ENCODE measurements at regions of chr19 and their contacts with region 1.

Region 1: GRCh38 chr19:1249298-1249989 is 1.1 kb downstream of the MIDN start:
- DNase-seq: no peak
- H3K4me3 ChIP-seq: peak overlapping the region; percentile 79 to 85
- H3K27ac ChIP-seq: peak overlapping the region; percentile 100
- H3K4me1 ChIP-seq: peaks cover 58% of the 10 kb centered on the region
- H3K27me3 ChIP-seq: no peaks in the 10 kb centered on the region
- CTCF ChIP-seq: no peak
- POLR2A ChIP-seq: peak; percentile 37 to 98

Region 2: DNA sequence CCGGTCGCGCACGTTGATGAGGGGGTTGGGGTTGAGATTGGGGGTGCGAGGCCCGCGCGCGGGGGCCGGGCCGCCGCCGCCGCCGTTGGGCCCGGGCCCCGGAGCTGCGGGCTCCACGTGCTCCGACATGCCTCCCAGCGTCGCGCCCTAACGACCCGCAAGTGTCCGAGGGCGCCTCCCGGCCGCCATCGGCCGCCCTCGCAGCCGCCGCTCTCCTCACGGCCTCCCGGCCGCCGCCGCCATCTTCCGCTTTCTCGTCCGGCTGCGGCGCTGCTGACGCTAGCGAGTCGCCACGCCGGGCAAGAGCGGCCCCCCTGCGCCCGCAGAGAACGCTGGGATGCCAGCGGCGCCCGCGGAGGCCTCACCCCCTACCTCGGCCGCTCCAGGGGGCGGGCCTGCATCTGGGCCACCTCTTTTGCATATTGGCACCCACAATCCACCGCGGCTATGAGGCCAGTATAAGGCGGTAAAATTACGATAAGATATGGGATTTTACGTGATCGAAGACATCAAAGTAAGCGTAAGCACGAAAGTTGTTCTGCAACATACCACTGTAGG is 228.5 kb before region 1 on chr19 and contains the start of gene TMEM259:
- intact Hi-C with region 1: loop called (anchors 5 kb)
- DNase-seq: no peak
- H3K4me3 ChIP-seq: peak within 1 kb of the TSS; percentile 86 to 87
- H3K27ac ChIP-seq: peak within 1 kb of the TSS; percentile 97
- H3K4me1 ChIP-seq: peaks cover 56% of the 10 kb centered on the region
- H3K27me3 ChIP-seq: no peaks in the 10 kb centered on the region
- CTCF ChIP-seq: no peak
- POLR2A ChIP-seq: peak in 1 of 2 donors; percentile 71
- total RNA-seq, gene TMEM259: 130 TPM

Region 3: GRCh38 chr19:1260636-1261537 is 11.4 kb after region 1 on chr19:
- intact Hi-C with region 1: loop called (anchors 1 kb)
- DNase-seq: no peak
- H3K4me3 ChIP-seq: peak overlapping the region; percentile 72 to 79
- H3K27ac ChIP-seq: peak overlapping the region; percentile 97
- H3K4me1 ChIP-seq: peaks cover 84% of the 10 kb centered on the region
- H3K27me3 ChIP-seq: no peaks in the 10 kb centered on the region
- CTCF ChIP-seq: no peak
- POLR2A ChIP-seq: peak in 1 of 2 donors; percentile 75

Region 4: GRCh38 chr19:1266116-1266915 is 16.9 kb after region 1 on chr19:
- intact Hi-C with region 1: loop called (anchors 1 kb)
- DNase-seq: peak in 1 of 2 donors; percentile 92
- H3K4me3 ChIP-seq: peak overlapping the region; percentile 54 to 69
- H3K27ac ChIP-seq: peak overlapping the region; percentile 99
- H3K4me1 ChIP-seq: peaks cover 80% of the 10 kb centered on the region
- H3K27me3 ChIP-seq: no peaks in the 10 kb centered on the region
- CTCF ChIP-seq: no peak
- POLR2A ChIP-seq: peak in 1 of 2 donors; percentile 5